A549 (cell line): ENCODE measurements at regions of chr7 and their contacts with region 1.

Region 1: DNA sequence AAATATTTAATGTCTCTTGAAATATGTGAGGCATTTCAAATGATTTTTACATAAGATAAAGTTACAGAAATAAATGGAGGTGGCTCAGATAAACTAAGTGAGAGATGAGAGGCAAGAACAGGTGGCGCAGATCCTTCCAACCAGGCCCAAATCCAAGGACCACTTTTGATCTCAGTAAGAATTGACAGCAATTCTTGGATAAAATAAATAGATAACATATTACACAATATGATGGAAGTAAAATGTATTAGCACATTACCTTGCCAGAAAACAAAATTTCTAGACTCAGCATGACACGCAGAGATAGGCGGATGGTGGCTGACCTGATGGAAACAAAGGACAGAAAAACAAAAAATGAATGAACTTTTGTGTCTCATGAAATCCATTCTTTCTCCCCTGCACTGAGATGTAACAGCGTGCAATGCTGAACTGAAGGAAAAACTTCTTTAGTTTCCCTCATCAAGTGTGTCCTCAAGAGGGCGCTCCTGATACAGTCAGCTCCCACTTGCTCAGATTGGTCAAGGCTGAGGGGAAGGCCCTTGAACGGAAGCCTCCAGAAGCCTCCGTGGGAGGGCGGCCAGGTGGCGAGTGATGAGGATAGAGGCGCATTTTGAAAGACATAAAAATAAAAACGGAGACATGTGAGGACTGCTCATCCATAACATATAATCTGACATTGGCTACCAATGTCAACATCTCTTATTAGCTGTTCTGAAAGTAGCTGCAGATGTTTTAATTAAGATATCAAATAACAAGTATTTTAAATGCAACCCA is 62.8 kb upstream of the GSDME start:
- DNase-seq: peak; percentile 81 to 91
- ATAC-seq: peak; percentile 86 to 87
- H3K4me3 ChIP-seq: peak overlapping the region; percentile 26; the same call in 2 of the 3 replicates
- H3K27ac ChIP-seq: peak overlapping the region; percentile 87 to 88
- H3K4me1 ChIP-seq: peaks cover 44% of the 10 kb centered on the region
- CTCF ChIP-seq: peak; percentile 94
- EP300 ChIP-seq: no peak
- POLR2A ChIP-seq: no peak
- RAD21 ChIP-seq: peak; percentile 93 to 94

Region 2: DNA sequence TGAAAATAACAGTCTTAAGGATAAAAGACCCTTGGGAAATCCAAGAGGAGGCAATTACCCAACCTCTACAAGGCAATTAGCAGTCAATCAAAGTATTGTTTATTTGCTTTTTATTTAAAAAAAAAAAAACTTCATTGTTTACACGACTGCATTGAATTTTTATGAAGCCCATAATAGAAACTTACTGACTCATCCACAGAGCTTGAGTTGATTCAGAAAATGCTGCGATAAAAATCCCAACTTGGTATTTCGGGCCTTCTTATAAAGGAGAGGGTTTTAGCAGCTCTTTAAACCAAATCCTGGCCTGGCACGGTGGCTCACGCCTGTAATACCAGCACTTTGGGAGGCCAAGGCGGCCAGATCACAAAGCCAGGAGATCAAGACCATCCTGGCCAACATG is 316.1 kb before region 1 on chr7:
- CTCF ChIA-PET with region 1: no interaction called
- POLR2A ChIA-PET with region 1: no interaction called
- DNase-seq: no peak
- ATAC-seq: no peak
- H3K4me3 ChIP-seq: no peak overlapping the region
- H3K27ac ChIP-seq: no peak overlapping the region
- H3K4me1 ChIP-seq: no peaks in the 10 kb centered on the region
- CTCF ChIP-seq: no peak
- EP300 ChIP-seq: no peak
- POLR2A ChIP-seq: no peak
- RAD21 ChIP-seq: no peak

Region 3: DNA sequence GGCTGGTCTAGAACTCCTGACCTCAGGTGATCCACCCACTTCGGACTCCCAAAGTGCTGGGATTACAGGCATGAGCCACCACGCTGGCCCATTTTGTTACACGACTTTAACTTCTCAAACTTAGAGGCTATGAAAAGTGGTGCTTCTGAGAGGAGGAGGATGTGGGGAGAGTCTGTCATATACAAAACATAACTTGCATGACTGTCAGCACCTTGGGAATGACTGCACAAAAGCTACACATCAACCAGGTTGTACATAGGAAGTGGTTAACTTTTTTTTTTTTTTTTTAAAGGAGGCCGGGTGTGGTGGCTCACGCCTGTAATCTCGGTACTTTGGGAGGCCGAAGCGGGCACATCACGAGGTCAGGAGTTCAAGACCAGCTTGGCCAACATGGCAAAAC is 19.4 kb before region 1 on chr7:
- CTCF ChIA-PET with region 1: interaction called, 10 read pairs
- POLR2A ChIA-PET with region 1: no interaction called
- DNase-seq: no peak
- ATAC-seq: no peak
- H3K4me3 ChIP-seq: no peak overlapping the region
- H3K27ac ChIP-seq: no peak overlapping the region
- H3K4me1 ChIP-seq: no peaks in the 10 kb centered on the region
- CTCF ChIP-seq: no peak
- EP300 ChIP-seq: no peak
- POLR2A ChIP-seq: no peak
- RAD21 ChIP-seq: no peak

Region 4: DNA sequence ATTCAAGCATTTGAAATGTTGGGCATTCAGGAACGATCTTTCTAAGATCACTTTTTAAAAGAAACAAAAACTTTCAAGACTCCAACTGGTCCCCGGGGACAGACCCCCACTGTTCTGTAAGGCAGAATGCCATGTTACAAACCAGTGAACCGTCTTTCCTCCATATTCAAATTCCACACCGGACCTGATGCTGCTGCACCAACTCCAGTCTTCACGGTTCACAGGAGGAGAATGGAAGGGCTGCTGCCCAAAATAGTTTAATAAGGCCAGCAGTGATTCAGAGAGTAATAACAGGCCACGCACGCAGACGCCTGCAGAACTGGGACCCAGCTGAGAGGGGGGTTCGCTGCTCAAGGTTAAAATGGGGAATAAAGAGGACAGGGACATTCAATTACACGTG is 112.7 kb after region 1 on chr7:
- CTCF ChIA-PET with region 1: no interaction called
- POLR2A ChIA-PET with region 1: no interaction called
- DNase-seq: no peak
- ATAC-seq: no peak
- H3K4me3 ChIP-seq: no peak overlapping the region
- H3K27ac ChIP-seq: no peak overlapping the region
- H3K4me1 ChIP-seq: no peaks in the 10 kb centered on the region
- CTCF ChIP-seq: no peak
- EP300 ChIP-seq: no peak
- POLR2A ChIP-seq: no peak
- RAD21 ChIP-seq: no peak

Region 5: GRCh38 chr7:25060487-25061055 is 240.5 kb after region 1 on chr7:
- CTCF ChIA-PET with region 1: interaction called, 11 read pairs
- POLR2A ChIA-PET with region 1: no interaction called
- DNase-seq: no peak
- ATAC-seq: no peak
- H3K4me3 ChIP-seq: no peak overlapping the region
- H3K27ac ChIP-seq: no peak overlapping the region
- H3K4me1 ChIP-seq: no peaks in the 10 kb centered on the region
- CTCF ChIP-seq: no peak
- EP300 ChIP-seq: no peak
- POLR2A ChIP-seq: no peak
- RAD21 ChIP-seq: no peak

Region 6: GRCh38 chr7:25069900-25070443 is 249.9 kb after region 1 on chr7:
- CTCF ChIA-PET with region 1: interaction called, 36 read pairs
- POLR2A ChIA-PET with region 1: no interaction called
- DNase-seq: peak; percentile 82 to 84
- ATAC-seq: peak; percentile 81 to 87
- H3K4me3 ChIP-seq: peak overlapping the region; percentile 41
- H3K27ac ChIP-seq: peak overlapping the region; percentile 63 to 84
- H3K4me1 ChIP-seq: peaks cover 21% of the 10 kb centered on the region
- CTCF ChIP-seq: peak; percentile 95
- EP300 ChIP-seq: no peak
- POLR2A ChIP-seq: no peak
- RAD21 ChIP-seq: peak; percentile 85 to 89